Activated naive CD4-positive, alpha-beta T cell treated with anti-CD3 and anti-CD28 coated beads for 36 hours (primary cell): ENCODE measurements at regions of chr11 and their contacts with region 1.

Region 1: DNA sequence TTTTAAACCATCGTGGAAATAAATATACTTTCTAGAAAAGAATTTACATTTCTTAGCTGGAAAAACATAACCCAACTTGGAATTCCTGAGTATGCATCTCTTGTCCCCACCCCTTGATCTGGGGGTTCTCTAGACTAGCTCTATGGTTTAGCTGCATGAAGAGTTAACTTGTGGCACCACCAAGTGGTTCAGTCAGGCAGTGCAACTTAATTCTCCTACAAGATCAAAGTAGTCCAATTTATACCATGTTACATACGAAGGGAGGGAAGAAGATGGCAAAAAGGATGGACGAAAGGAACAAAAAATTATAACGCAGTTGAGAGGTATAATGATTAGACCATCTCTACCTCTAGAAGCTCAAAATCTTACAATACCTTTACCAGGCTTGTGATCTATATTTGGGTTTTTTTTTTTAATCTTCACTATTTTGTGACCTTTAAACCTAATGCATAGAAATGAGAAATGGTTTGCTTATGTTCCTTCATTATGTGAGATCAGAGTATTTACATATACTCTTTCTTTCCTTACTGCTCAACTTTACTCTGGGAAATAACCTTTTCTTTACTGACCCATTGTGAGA is 28.5 kb upstream of the ALKBH3 start:
- DNase-seq: peak; percentile 87
- H3K4me3 Mint-ChIP-seq: no peak overlapping the region
- H3K27ac Mint-ChIP-seq: no peak overlapping the region
- H3K4me1 Mint-ChIP-seq: peaks cover 4% of the 10 kb centered on the region
- H3K27me3 Mint-ChIP-seq: no peaks in the 10 kb centered on the region

Region 2: GRCh38 chr11:43504316-43504950 is 347.7 kb before region 1 on chr11:
- CTCF ChIA-PET with region 1: interaction called, 13 read pairs
- intact Hi-C with region 1: loop called (anchors 1 kb)
- DNase-seq: peak; percentile 17
- H3K4me3 Mint-ChIP-seq: no peak overlapping the region
- H3K27ac Mint-ChIP-seq: no peak overlapping the region
- H3K4me1 Mint-ChIP-seq: no peaks in the 10 kb centered on the region
- H3K27me3 Mint-ChIP-seq: peaks cover 6% of the 10 kb centered on the region

Region 3: GRCh38 chr11:43579171-43579918 is 272.8 kb before region 1 on chr11:
- CTCF ChIA-PET with region 1: interaction called, 22 read pairs
- intact Hi-C with region 1: loop called (anchors 2 kb)
- DNase-seq: peak; percentile 58
- H3K4me3 Mint-ChIP-seq: peak overlapping the region; percentile 72
- H3K27ac Mint-ChIP-seq: no peak overlapping the region
- H3K4me1 Mint-ChIP-seq: peaks cover 54% of the 10 kb centered on the region
- H3K27me3 Mint-ChIP-seq: peaks cover 93% of the 10 kb centered on the region

Region 4: GRCh38 chr11:43643898-43644620 is 208.1 kb before region 1 on chr11:
- CTCF ChIA-PET with region 1: interaction called, 3 read pairs
- intact Hi-C with region 1: loop called (anchors 5 kb)
- DNase-seq: peak; percentile 93
- H3K4me3 Mint-ChIP-seq: peak overlapping the region; percentile 98
- H3K27ac Mint-ChIP-seq: peak overlapping the region; percentile 92
- H3K4me1 Mint-ChIP-seq: peaks cover 23% of the 10 kb centered on the region
- H3K27me3 Mint-ChIP-seq: peaks cover 12% of the 10 kb centered on the region

Region 5: GRCh38 chr11:43825217-43825816 is 26.8 kb before region 1 on chr11:
- CTCF ChIA-PET with region 1: interaction called, 17 read pairs
- intact Hi-C with region 1: loop called (anchors 1 kb)
- DNase-seq: peak; percentile 27
- H3K4me3 Mint-ChIP-seq: no peak overlapping the region
- H3K27ac Mint-ChIP-seq: no peak overlapping the region
- H3K4me1 Mint-ChIP-seq: peaks cover 2% of the 10 kb centered on the region
- H3K27me3 Mint-ChIP-seq: no peaks in the 10 kb centered on the region

Region 6: GRCh38 chr11:43830928-43831440 is 21.2 kb before region 1 on chr11:
- CTCF ChIA-PET with region 1: interaction called, 17 read pairs
- intact Hi-C with region 1: no loop called
- DNase-seq: peak; percentile 80
- H3K4me3 Mint-ChIP-seq: no peak overlapping the region
- H3K27ac Mint-ChIP-seq: peak overlapping the region; percentile 86
- H3K4me1 Mint-ChIP-seq: peaks cover 15% of the 10 kb centered on the region
- H3K27me3 Mint-ChIP-seq: no peaks in the 10 kb centered on the region

Region 7: DNA sequence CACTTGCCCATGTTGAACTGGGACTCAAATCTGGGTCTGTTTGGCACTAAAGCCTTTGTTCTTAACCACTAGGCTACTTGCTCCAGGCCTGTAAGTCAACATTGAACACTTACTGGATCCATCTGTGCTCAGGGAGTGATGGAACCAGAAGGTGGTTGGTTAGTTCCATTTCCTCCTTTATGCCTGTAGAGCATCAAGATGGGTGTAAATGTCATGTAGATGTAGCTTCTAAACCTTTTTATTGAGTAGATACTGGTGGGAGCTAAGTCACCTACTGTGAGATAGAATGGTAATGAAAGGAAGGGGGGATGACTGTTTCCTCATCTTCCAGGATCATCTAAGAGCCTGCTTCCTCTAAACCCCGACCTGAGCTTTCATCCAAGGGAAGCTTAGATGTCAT is 10.1 kb before region 1 on chr11:
- CTCF ChIA-PET with region 1: interaction called, 16 read pairs
- intact Hi-C with region 1: no loop called
- DNase-seq: no peak
- H3K4me3 Mint-ChIP-seq: no peak overlapping the region
- H3K27ac Mint-ChIP-seq: no peak overlapping the region
- H3K4me1 Mint-ChIP-seq: no peaks in the 10 kb centered on the region
- H3K27me3 Mint-ChIP-seq: no peaks in the 10 kb centered on the region